ENCODE measurements at regions of chr4 and their contacts with region 1.

Region 1: DNA sequence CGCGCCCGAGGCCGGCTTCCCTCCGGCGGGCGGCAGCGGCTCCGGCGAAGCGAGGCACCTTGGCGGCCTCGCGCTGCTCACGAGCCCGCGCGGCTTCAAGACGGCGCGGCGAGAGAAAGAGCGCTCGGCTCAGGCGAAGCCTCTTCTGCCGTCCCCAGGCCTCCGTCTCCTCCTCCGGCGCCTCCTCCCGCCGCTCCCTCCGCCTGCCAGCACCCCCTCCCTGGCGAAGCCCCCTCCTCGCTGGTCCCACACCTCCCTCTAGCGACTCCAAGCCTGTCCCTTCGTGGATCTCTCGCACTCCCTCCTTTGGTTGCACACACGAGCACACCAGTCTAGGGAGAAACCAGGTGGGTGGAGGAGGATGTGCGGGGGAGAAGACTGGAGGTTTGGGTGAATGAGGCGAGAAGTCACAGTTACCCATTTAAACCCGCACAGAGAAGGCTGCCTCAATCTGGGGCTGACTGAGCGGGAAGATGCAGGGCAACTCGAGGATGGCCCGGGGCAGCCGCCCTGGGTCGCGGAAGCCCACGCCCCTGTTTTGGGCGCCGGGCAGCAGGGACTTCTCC is at the start of gene CAMK2D:
- DNase-seq: peak; percentile 88 to 95
- H3K4me3 ChIP-seq: peak within 1 kb of the TSS; percentile 69 to 90
- H3K27ac ChIP-seq: peak within 1 kb of the TSS; percentile 97 to 98
- H3K4me1 ChIP-seq: peaks cover 0 to 33% (median 10%) of the 10 kb centered on the region in 4 donors
- H3K27me3 ChIP-seq: no peaks in the 10 kb centered on the region
- CTCF ChIP-seq: peak; percentile 37 to 58

Region 2: GRCh38 chr4:113384600-113384999 is 377.1 kb before region 1 on chr4:
- intact Hi-C with region 1: no loop called
- DNase-seq: no peak
- H3K4me3 ChIP-seq: no peak overlapping the region
- H3K27ac ChIP-seq: peak overlapping the region in 1 of 2 donors; percentile 5
- H3K4me1 ChIP-seq: peaks cover 0 to 41% (median 17%) of the 10 kb centered on the region in 4 donors
- H3K27me3 ChIP-seq: no peaks in the 10 kb centered on the region
- CTCF ChIP-seq: no peak

Region 3: DNA sequence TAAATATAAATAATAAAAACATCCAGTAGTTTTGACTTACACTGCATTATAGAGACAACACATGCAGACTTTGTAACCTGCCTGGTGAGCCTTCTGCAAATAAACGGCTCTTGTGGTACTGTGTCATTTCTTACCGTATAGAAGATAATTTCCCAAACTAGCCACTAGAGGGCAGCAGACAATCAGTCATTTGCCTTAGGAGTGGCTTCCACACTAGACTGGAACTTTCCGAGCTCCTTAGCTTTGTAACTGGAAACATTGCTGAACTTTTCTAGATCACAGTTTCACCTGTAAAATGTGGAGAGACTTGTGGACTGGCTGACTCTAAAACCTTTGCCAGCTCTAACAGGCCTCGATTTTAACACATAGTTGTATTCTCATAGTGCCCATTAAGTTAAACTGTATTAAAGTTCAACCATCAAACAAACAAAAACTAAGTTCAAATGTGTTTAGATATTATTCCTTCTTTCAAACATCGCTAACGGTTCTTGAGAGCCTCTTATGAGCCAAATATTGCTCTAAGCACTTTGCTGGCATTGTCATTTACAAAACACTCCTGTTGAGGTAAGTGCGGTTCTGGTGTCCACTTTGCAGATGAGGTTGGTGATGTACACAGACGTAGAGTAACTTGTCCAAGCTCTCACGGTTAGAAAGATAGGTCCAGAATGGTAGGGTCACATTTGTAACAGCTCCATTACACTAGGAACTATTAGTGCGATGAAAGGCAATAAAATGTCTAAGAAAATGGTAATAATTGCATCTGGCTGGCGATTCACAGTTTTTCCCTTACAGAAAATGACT is 366.8 kb before region 1 on chr4:
- intact Hi-C with region 1: loop called (anchors 5 kb)
- DNase-seq: peak in 1 of 2 donors; percentile 43
- H3K4me3 ChIP-seq: no peak overlapping the region
- H3K27ac ChIP-seq: no peak overlapping the region
- H3K4me1 ChIP-seq: peaks cover 0 to 12% (median 9%) of the 10 kb centered on the region in 4 donors
- H3K27me3 ChIP-seq: no peaks in the 10 kb centered on the region
- CTCF ChIP-seq: peak; percentile 81 to 92

Region 4: DNA sequence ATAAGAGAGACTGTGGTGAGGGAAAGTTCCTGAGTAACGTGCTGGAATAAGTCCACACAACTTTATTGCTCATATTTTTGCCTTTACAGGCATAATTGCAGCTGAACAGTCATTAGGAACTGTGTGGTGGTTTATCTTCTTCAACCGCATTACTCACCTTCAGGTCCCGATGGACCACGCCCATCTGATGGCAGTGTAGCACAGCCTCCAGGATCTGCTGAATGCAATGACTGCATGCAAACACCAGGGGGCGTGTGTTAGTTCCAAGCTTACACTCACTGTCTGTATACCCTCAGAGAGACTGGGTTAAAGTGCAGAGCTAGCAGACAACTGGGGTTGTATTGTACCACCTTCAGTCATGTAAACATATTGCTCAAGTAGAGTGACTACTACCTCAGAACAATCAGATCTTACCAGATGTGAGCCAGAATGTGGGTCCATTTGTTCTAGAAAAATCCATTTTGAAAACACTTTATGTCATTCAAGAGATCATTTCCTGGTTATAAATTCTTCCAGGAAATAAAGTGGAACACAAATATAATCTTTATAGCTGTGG is 214.1 kb before region 1 on chr4:
- intact Hi-C with region 1: loop called (anchors 5 kb)
- DNase-seq: peak; percentile 90 to 91
- H3K4me3 ChIP-seq: no peak overlapping the region
- H3K27ac ChIP-seq: peak overlapping the region in 1 of 2 donors; percentile 41
- H3K4me1 ChIP-seq: peaks cover 0 to 6% (median 0%) of the 10 kb centered on the region in 4 donors
- H3K27me3 ChIP-seq: no peaks in the 10 kb centered on the region
- CTCF ChIP-seq: peak; percentile 93 to 94

Region 5: DNA sequence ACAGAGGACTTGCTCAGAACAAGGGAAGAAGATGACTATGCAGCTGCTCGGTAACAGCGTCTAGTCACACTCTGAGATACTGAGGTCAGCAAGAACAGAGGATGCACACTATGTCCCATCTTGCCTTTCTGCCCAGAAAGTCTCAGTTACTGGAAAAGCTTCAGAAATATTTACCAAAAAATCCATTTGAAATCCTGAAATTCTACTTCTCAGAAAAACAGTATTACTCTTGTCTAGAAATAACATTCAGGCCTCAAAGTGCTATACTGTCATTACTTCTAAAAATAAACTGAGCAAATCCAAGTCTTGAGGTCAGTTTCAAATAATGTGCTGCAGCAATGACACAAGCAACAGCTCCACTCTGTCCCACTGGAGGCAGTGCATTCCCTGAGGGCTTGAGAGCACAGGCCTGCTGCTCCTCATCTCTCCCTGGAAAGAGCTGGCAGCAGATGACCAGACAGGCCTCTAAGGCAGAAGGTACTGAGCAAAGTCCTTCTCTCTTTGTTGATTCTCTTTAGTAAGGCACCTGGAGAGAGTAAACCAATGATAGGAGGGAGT is 77.1 kb before region 1 on chr4:
- intact Hi-C with region 1: loop called (anchors 2 kb)
- DNase-seq: peak; percentile 51 to 86
- H3K4me3 ChIP-seq: no peak overlapping the region
- H3K27ac ChIP-seq: peak overlapping the region; percentile 54 to 69
- H3K4me1 ChIP-seq: peaks cover 0 to 69% (median 17%) of the 10 kb centered on the region in 4 donors
- H3K27me3 ChIP-seq: no peaks in the 10 kb centered on the region
- CTCF ChIP-seq: peak; percentile 37 to 55

Region 6: DNA sequence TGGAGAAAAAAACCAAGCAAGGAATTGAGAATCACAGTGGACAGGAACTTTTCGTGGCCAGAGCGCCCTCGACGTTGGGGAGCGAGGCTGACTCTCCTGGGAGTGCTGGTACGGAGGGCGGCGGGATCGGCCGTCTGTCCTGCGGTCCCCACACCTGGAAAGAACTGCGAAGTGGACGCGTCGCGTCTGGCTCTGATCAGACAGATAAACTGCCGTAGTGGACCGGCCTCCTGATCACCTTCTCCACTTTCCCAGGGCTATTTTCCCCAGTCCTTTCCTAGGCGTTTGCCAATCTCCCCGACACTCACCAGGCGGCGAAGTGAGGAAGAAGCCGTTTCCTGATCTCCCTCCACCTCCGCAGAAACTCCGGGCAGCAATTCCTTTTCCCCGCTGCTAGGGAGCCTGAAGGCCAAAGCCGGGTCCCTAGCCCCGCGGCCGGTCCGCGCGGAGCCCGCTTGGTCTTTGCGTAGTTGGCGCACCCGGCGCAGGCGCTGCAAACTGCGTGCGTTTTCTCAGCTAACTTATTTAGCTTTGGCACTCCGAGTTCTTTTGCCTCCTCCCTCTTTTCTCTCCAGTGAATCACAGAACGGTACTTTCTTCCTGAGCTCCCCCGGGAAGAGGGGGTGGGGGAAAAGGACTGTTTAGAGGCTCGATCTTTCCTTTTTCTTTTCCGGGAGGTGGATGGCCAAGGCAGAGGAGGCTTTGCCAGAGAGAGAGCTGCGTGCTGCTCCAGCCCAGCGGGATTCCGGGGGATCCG is 217.6 kb after region 1 on chr4 and contains the start of gene ARSJ:
- intact Hi-C with region 1: loop called (anchors 10 kb)
- DNase-seq: peak; percentile 46 to 80
- H3K4me3 ChIP-seq: peak within 1 kb of the TSS; percentile 83 to 92
- H3K27ac ChIP-seq: peak within 1 kb of the TSS; percentile 96 to 97
- H3K4me1 ChIP-seq: peaks cover 0 to 30% (median 4%) of the 10 kb centered on the region in 4 donors
- H3K27me3 ChIP-seq: no peaks in the 10 kb centered on the region
- CTCF ChIP-seq: no peak

Measured in tibial artery (tissue), 4 donors.